Ovary (tissue), 10 donors: ENCODE measurements at regions of chr11 and their contacts with region 1.

Region 1: GRCh38 chr11:16924826-16925560 is 89.2 kb downstream of the PLEKHA7 start:
- DNase-seq: peak; percentile 81 to 89 (median 84)
- H3K4me3 ChIP-seq: peak overlapping the region; percentile 40
- H3K27ac ChIP-seq: peak overlapping the region; percentile 45 to 69
- H3K4me1 ChIP-seq: peaks cover 22% of the 10 kb centered on the region
- H3K27me3 ChIP-seq: no peaks in the 10 kb centered on the region
- CTCF ChIP-seq: no peak
- EP300 ChIP-seq: no peak
- POLR2A ChIP-seq: no peak

Region 2: DNA sequence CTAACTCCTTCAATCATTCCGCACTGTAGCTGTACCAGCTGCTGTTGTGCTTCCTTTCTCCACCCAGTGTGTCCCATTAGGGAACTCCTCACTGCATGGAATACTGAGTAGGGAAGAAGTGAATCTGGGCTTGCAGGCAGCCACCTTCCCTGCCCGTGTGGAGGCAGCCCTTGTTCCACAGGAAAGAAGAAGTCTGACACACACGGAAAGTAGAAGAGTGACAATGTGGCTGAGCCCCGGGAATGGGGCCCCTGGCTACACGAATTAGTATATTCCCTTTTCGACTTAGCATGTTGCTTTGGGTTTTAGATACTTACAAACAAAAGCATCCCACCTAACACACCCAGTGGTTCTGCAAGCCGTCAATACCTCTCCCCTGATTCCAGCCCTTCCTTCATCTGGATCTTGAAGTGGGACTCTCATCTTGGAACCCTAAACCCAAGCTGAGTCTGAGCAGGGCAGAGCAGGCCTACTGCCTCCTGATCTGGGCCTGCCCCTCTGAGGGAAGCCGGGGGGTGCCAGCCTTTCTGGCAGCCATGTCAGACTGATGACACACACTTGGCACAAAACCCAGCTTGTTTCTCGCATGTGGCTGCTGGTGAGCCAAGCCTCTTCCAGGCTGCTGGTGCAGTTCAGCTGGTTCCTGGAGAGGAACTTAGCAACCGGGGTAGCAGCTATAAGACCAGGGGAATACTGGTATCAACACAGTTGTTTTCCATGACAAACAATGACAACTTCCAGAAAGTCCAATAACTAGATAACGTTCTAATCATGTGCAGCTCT is 114.9 kb before region 1 on chr11:
- intact Hi-C with region 1: loop called in 1 of 4 experiments (anchors 10 kb)
- DNase-seq: no peak
- H3K4me3 ChIP-seq: no peak overlapping the region
- H3K27ac ChIP-seq: no peak overlapping the region
- H3K4me1 ChIP-seq: no peaks in the 10 kb centered on the region
- H3K27me3 ChIP-seq: no peaks in the 10 kb centered on the region
- CTCF ChIP-seq: no peak
- EP300 ChIP-seq: no peak
- POLR2A ChIP-seq: no peak

Region 3: DNA sequence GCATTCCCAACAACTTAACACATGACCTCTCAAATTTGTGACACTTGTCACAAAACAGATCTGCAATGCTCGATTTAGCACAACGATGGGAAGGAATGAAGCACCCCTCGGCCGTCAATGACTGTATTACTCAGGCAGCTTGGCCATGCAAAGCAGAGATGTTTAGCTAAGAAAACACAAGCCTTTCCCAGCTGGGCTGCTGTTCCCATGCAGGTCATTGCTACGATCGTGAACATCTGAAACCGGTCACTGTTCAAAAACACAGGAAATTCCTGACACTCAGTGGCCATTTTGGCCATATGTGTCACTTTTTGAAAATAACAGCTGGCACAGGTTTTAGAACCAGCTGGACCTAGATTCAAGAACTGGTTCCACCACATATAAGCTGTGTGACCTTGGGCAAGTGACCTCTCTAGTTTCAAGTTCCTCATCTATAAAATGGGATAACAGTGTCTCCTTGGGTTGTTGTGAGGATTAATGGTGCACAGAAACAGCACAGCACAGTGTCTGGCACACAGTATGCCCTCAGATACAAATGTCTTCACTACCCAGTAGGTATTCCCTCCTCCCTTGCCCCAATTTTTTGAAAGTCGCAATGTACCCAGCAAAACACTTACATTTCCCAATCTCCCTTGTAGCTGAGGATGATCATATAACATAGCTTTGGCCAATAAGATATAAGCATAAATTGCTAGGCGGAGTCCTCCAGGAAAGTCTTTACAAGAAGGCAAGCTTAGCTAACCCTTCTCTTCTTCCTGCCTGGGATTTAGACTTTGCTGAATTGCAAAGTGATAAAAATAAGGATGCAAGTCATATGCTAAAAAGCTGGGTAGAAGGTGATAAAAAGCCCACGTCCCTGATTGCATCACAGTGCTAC is 93.4 kb before region 1 on chr11:
- intact Hi-C with region 1: no loop called
- DNase-seq: no peak
- H3K4me3 ChIP-seq: no peak overlapping the region
- H3K27ac ChIP-seq: no peak overlapping the region
- H3K4me1 ChIP-seq: no peaks in the 10 kb centered on the region
- H3K27me3 ChIP-seq: no peaks in the 10 kb centered on the region
- CTCF ChIP-seq: no peak
- EP300 ChIP-seq: no peak
- POLR2A ChIP-seq: no peak